Left cardiac atrium (tissue), 4 donors: ENCODE measurements at regions of chr19 and their contacts with region 1.

Region 1: DNA sequence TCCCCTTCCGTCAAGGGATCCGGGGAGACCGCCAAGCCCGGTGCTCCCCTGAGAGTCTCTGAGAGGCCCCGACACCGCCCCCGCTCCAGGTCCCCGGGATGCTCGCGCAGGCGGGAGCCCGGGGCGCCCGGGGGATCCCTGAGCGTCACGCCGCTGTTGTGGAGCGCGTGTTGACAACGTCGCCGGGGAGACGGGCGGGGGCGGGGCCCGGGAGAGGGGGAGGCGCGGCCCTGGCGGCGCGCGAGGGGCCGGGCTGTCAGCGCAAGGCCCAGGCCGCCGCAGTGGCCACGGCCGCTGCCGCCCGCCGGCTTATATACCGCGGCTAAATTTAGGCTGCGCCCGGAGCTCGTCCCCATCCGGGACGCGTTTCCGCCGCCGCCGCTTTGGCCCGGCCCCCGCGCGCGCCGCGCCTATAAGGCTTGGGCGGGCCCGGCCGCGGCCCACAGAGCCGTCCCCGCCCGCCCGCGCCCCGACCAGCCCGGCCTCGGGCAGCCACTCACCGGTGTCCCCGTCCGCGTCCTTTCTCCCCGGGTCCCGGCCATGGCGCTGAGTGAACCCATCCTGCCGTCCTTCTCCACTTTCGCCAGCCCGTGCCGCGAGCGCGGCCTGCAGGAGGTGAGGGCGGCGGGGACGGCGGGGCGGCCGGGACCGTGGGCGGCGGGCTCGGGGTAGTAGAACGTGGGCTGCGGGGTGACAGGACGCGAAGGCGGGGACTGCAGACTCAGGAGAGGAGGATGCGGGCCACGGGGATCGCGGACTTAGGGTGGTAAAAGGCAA is at the start of gene KLF2:
- DNase-seq: peak; percentile 95
- ATAC-seq: peak; percentile 86 to 88
- total RNA-seq, gene KLF2: 66.4 to 77.5 TPM

Region 2: GRCh38 chr19:16247353-16248182 is 77.0 kb before region 1 on chr19:
- intact Hi-C with region 1: loop called (anchors 5 kb)
- DNase-seq: peak; percentile 89
- ATAC-seq: peak; percentile 95 to 98

Region 3: GRCh38 chr19:16285769-16286498 is 38.6 kb before region 1 on chr19:
- intact Hi-C with region 1: loop called in 1 of 2 experiments (anchors 5 kb)
- DNase-seq: peak; percentile 60
- ATAC-seq: peak in 1 of 2 donors; percentile 13